ENCODE measurements at regions of chr4 and their contacts with region 1.

Region 1: DNA sequence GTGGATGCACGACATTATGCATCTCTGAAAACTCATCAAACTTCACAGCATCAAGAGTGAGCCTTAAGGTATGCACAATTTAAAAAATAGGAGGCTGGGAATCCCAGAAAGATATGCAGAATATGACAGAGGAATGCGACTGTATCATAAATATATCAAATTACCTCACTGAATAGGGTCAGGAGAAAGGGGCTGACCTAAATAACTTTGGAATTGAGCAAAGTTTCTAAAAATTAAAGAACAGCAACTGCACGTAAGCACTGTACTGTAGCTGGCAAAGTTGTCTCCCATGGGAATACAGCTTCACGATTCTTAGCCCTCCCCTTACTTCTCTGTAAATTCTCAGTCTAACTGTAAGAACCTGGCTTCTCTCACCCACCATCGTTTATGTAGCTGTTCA is 397.4 kb upstream of the ZFP42 start:
- DNase-seq: no peak
- H3K4me3 ChIP-seq: no peak overlapping the region
- H3K27ac ChIP-seq: no peak overlapping the region
- H3K4me1 ChIP-seq: peaks cover 16% of the 10 kb centered on the region
- H3K27me3 ChIP-seq: no peaks in the 10 kb centered on the region

Region 2: DNA sequence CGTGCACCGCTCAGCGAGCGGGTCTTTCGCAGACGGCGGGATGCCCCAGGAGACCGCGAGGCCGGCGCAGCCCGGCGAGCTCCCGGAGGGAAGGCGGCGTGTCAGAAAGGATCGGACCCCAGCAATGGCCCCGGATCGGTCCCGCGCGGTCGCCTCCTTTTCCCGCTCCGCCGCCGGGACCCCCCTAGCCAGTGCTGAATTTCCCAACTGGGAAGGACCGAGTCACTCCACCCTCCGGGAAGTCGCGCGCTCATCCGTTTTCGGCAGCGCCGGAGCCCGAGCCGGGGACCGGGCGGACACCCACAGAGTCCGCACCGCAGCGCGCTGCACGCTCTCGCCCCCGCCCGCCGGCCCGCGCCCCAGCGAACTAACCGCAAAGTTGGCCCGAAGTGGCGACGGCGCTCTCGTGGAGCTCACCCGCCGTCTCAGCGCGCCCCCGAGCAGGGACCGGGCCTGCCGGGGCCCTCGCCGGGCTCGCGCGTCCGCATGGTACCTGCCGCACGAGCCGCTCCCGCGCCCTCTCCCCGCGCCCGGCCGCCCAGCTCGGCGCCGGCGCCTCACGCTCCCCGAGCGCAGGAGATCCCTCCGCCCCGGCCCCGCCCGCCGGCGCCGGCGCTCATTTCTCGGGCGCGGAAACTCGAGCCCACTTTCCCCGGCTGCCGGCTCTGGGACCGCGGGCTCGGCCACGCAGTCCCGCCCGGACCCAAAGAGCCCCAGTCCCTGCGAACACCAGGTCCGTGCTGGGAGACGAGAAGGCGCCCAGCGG is 874.7 kb before region 1 on chr4 and contains the start of gene FAT1:
- in situ Hi-C with region 1: loop called (anchors 25 kb)
- DNase-seq: peak; percentile 90
- H3K4me3 ChIP-seq: peak within 1 kb of the TSS; percentile 88
- H3K27ac ChIP-seq: peak within 1 kb of the TSS; percentile 86
- H3K4me1 ChIP-seq: peaks cover 22% of the 10 kb centered on the region
- H3K27me3 ChIP-seq: no peaks in the 10 kb centered on the region
- total RNA-seq, gene FAT1: 250 and 261 TPM in 2 replicates

Region 3: DNA sequence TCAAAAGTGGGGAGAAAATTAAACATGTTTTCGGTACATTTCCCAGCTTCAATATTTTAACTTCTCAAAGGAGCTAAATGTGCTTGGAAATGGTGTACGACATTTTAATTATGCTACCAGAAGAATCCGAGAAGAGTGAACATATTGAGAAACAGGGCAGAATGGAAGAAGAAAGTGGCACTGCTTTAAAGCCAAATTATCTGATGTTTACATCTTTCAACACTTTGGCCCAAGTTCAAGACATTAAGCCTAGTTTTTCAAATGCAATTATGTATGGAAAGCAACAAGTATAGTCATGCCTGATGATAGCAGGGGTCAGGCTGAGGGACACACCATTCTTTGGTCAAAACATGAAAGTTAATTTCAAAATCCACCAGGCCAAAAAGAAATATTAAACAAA is 180.5 kb before region 1 on chr4:
- in situ Hi-C with region 1: no loop called
- DNase-seq: no peak
- H3K4me3 ChIP-seq: no peak overlapping the region
- H3K27ac ChIP-seq: no peak overlapping the region
- H3K4me1 ChIP-seq: no peaks in the 10 kb centered on the region
- H3K27me3 ChIP-seq: no peaks in the 10 kb centered on the region

Region 4: GRCh38 chr4:187887906-187888305 is 289.7 kb after region 1 on chr4:
- in situ Hi-C with region 1: no loop called
- DNase-seq: no peak
- H3K4me3 ChIP-seq: no peak overlapping the region
- H3K27ac ChIP-seq: no peak overlapping the region
- H3K4me1 ChIP-seq: no peaks in the 10 kb centered on the region
- H3K27me3 ChIP-seq: no peaks in the 10 kb centered on the region

Region 5: DNA sequence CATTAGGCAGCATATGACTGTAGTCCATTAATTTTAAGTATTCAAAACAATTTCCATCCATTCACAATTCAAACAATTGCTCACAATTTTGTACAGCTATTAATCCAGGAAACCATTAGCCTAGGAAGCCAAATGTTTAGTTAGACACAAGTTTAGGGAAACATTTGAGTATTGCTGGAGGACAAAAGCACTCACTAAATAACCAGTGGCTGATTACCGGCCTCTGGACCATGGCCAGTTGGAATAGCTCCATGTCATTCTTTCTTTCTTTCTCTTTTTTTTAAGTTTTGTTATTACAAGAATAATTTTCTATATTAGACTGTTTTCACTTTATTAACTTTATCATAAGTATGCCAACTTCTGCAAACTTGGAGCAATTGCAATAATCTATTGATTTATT is 479.9 kb after region 1 on chr4:
- in situ Hi-C with region 1: no loop called
- DNase-seq: no peak
- H3K4me3 ChIP-seq: no peak overlapping the region
- H3K27ac ChIP-seq: no peak overlapping the region
- H3K4me1 ChIP-seq: no peaks in the 10 kb centered on the region
- H3K27me3 ChIP-seq: no peaks in the 10 kb centered on the region